ENCODE measurements at regions of chr19 and their contacts with region 1.

Region 1: DNA sequence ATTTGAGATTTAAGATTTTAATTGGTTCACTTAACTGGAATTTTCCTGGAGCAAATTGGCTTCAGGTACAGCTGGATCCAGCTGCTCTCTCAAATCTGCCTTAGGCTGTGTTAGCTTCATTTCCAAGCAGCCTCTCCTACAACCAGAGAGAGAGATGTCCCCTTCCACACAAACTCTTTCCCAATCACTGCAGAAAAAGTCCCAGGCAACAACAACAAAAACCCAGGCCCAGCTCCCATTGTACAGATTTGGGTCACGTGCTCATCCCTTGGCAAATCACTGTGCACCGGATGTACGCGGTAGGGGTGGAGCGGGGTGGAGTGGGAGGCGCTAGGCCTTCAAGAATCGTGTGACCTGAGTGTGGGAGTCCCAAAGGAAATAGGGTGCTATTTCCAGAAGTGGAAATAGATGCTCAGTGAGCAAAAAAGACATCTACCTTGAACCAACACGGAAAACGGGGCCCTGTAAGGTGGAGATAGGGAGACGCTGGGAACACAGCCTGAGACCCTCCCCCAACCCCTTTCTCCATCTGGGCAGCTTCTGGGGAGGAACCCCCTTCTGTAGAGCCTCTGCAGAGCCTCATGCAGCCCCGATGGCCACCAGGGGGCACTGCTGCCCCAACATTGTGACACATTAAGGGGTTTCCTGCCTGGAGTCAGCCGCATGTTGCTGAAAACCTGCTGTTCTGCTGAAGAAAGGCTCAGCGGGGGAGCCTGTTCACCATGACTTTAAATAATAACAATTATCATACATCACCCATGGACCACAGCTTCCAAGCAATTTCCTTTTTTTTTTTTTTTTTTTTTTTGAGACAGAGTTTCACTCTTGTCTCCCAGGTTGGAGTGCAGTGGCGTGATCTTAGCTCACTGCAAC is 25.4 kb downstream of the HPN start:
- DNase-seq: peak; percentile 85 to 92
- H3K4me3 ChIP-seq: no peak overlapping the region
- H3K4me3 Mint-ChIP-seq: peak overlapping the region; percentile 43
- H3K27ac Mint-ChIP-seq: no peak overlapping the region
- H3K4me1 ChIP-seq: no peaks in the 10 kb centered on the region
- H3K4me1 Mint-ChIP-seq: no peaks in the 10 kb centered on the region
- H3K27me3 ChIP-seq: no peaks in the 10 kb centered on the region; the same call in 1 of the 2 replicates
- H3K27me3 Mint-ChIP-seq: peaks cover 3% of the 10 kb centered on the region
- CTCF ChIP-seq: peak; percentile 95 to 96

Region 2: GRCh38 chr19:34787057-34787824 is 279.7 kb before region 1 on chr19:
- CTCF ChIA-PET with region 1: no interaction called
- POLR2A ChIA-PET with region 1: no interaction called
- intact Hi-C with region 1: no loop called
- DNase-seq: no peak
- H3K4me3 ChIP-seq: no peak overlapping the region
- H3K4me3 Mint-ChIP-seq: no peak overlapping the region
- H3K27ac Mint-ChIP-seq: no peak overlapping the region
- H3K4me1 ChIP-seq: no peaks in the 10 kb centered on the region
- H3K4me1 Mint-ChIP-seq: no peaks in the 10 kb centered on the region
- H3K27me3 ChIP-seq: no peaks in the 10 kb centered on the region; the same call in 1 of the 2 replicates
- H3K27me3 Mint-ChIP-seq: peaks cover 14% of the 10 kb centered on the region
- CTCF ChIP-seq: no peak

Region 3: DNA sequence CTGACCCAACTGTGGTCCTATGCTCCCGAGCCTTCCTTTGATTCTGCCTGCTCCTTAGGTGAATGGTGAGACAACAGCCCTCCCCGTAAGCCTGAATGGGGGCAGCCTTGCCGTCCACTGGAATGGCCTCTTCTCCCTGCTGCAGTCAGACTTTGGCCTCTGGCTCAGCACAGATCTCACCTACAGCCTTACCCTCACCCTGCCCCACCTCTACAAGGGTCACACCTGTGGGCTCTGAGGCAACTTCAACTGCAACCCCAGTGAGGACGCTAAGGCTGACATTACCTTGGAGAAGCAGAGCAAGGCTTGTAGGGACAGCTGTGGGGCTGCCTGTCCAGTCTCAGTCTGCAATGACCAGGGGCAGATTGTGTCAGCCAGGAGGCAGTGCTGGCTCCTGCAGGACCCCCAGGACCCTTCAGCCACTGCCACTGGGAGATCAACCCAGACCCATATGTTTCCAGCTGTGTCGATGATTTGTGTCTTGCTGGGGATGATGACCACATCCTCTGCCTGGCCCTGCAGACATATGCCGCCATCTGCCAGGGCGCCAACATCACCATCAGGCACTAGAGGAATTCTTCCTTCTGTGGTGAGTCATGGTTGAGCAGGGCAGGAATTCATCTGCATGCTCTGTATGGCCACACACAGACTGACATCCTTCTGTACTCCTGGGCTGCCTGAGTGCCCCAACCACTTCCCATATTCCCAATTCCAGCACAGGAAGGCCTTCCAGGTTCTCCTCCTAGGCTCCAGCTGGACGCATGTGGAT is 21.4 kb after region 1 on chr19:
- CTCF ChIA-PET with region 1: interaction called, 7 read pairs
- POLR2A ChIA-PET with region 1: no interaction called
- intact Hi-C with region 1: loop called (anchors 2 kb)
- DNase-seq: no peak
- H3K4me3 ChIP-seq: no peak overlapping the region
- H3K4me3 Mint-ChIP-seq: no peak overlapping the region
- H3K27ac Mint-ChIP-seq: no peak overlapping the region
- H3K4me1 ChIP-seq: peaks cover 29% of the 10 kb centered on the region
- H3K4me1 Mint-ChIP-seq: peaks cover 14% of the 10 kb centered on the region
- H3K27me3 ChIP-seq: no peaks in the 10 kb centered on the region
- H3K27me3 Mint-ChIP-seq: no peaks in the 10 kb centered on the region
- CTCF ChIP-seq: no peak

Region 4: GRCh38 chr19:35135389-35135909 is 68.5 kb after region 1 on chr19:
- CTCF ChIA-PET with region 1: interaction called, 24 read pairs
- POLR2A ChIA-PET with region 1: no interaction called
- intact Hi-C with region 1: loop called (anchors 1 kb)
- DNase-seq: peak; percentile 82 to 89
- H3K4me3 ChIP-seq: no peak overlapping the region
- H3K4me3 Mint-ChIP-seq: no peak overlapping the region
- H3K27ac Mint-ChIP-seq: no peak overlapping the region
- H3K4me1 ChIP-seq: peaks cover 11% of the 10 kb centered on the region; the same call in 1 of the 2 replicates
- H3K4me1 Mint-ChIP-seq: peaks cover 7% of the 10 kb centered on the region
- H3K27me3 ChIP-seq: no peaks in the 10 kb centered on the region
- H3K27me3 Mint-ChIP-seq: peaks cover 2% of the 10 kb centered on the region
- CTCF ChIP-seq: peak; percentile 94 to 96

Region 5: GRCh38 chr19:35247526-35248306 is 180.8 kb after region 1 on chr19:
- CTCF ChIA-PET with region 1: no interaction called
- POLR2A ChIA-PET with region 1: no interaction called
- intact Hi-C with region 1: loop called (anchors 10 kb)
- DNase-seq: peak; percentile 97
- H3K4me3 ChIP-seq: peak overlapping the region; percentile 91
- H3K4me3 Mint-ChIP-seq: peak overlapping the region; percentile 86
- H3K27ac Mint-ChIP-seq: peak overlapping the region; percentile 94
- H3K4me1 ChIP-seq: peaks cover 11% of the 10 kb centered on the region
- H3K4me1 Mint-ChIP-seq: peaks cover 21% of the 10 kb centered on the region
- H3K27me3 ChIP-seq: no peaks in the 10 kb centered on the region
- H3K27me3 Mint-ChIP-seq: no peaks in the 10 kb centered on the region
- CTCF ChIP-seq: peak in 1 of 2 experiments; percentile 90